Pancreas (tissue), 10 donors: ENCODE measurements at regions of chr9 and their contacts with region 1.

Region 1: DNA sequence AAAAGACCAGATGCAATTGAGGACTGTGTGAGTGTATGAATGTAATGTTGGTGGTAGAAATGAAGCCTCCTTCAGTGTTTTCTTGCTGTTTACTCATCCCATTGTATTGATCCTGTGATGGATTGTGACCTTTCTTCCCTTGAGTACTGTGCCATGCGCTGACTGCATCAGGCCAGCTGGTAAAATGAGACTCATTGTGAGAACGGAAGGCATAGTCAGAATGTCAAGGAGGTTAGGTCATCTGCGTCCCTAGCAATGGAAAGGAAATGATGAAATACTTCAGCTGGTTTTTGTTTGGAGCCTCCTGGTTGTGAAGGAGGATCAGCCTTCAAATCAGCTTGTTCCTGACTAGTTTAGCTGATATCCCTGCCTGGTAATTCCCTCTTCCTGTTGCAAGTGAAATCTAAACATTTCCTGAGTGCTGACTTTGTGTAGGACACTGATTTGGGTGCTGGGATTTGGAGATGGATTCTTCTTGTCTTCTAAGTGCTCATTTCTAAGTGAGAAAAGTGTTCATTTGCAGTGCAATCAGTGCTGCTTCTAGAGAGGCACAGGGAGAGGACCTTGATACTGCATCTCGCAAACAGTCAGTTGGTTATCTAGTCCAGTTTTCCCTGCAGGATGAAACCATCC is 35.5 kb downstream of the TNFSF8 start:
- DNase-seq: no peak
- ATAC-seq: peak in 3 of 4 donors; percentile 38 to 84 (median 70)
- H3K4me3 ChIP-seq: no peak overlapping the region
- H3K27ac ChIP-seq: peak overlapping the region in 1 of 4 donors; percentile 17
- H3K4me1 ChIP-seq: peaks cover 0 to 9% (median 0%) of the 10 kb centered on the region in 3 donors
- H3K27me3 ChIP-seq: no peaks in the 10 kb centered on the region
- CTCF ChIP-seq: no peak

Region 2: GRCh38 chr9:114745108-114745848 is 149.6 kb before region 1 on chr9:
- intact Hi-C with region 1: loop called in 1 of 3 experiments (anchors 10 kb)
- DNase-seq: no peak
- ATAC-seq: no peak
- H3K4me3 ChIP-seq: no peak overlapping the region
- H3K27ac ChIP-seq: no peak overlapping the region
- H3K4me1 ChIP-seq: no peaks in the 10 kb centered on the region
- H3K27me3 ChIP-seq: no peaks in the 10 kb centered on the region
- CTCF ChIP-seq: no peak